Cardiac septum (tissue), 1 donor: ENCODE measurements at regions of chr13 and their contacts with region 1.

Region 1: DNA sequence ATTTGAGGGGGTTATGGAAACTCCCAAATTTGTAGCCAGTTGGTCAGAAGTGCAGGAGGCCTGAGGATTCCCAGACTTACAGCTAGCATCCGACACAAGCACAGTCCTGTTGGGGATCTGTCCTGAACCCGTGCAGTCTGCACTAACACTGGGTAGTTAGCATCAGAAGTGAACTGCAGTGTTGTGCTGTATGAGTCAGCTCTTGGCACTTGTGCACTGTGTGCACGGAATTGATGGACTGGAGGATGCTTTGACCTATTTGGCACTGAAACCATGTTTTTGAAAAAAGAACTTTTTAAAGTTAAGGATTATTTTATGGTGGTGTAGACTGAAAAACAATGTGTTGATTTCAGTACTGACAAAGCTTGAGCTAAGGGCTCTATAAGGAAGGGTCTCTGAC is 279.0 kb downstream of the NHLRC3 start:
- DNase-seq: peak; percentile 78

Region 2: DNA sequence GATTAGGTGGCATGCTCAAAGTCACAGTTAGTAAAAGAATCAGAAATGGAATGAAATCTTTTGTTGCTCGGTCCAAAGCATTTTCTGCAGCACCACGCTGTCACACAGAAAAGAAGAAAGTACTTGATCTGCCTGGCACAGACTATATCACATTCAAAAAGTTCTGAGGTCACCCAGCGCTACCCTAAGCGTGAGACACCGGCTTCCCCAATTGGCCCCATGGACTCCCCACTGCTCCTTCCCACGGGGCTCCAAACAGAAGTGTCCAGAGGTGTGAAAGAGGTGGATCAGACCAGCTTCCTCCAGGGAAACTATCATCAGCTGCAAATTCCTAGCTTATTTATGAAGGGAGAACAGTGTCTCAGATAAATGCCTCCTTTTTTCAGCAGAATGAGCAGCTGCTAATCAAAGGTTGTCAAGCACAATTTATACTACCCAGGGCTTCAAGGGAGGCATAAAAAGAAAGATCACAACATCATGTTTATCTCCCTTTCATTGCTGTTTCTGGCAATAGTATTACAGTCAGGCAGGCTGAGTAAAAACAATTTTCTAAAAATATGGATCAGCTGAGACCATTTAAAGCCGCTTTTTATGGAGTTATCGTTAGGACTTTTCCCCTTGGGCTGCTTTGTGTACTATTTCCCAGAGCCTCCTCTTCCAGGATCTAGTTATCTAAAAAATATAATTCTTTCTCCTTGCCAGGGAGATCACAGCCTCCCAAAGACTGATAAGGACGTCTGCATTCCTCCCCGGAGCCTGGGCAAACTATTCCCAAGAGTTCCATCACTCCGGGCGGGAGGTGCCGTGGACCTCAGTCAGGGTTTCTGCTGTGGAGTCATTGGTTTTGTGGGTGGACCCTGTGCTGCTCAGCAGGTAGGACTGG is 77.7 kb after region 1 on chr13:
- intact Hi-C with region 1: loop called (anchors 5 kb)
- DNase-seq: no peak